H1 (cell line): ENCODE measurements at regions of chr4 and their contacts with region 1.

Region 1: DNA sequence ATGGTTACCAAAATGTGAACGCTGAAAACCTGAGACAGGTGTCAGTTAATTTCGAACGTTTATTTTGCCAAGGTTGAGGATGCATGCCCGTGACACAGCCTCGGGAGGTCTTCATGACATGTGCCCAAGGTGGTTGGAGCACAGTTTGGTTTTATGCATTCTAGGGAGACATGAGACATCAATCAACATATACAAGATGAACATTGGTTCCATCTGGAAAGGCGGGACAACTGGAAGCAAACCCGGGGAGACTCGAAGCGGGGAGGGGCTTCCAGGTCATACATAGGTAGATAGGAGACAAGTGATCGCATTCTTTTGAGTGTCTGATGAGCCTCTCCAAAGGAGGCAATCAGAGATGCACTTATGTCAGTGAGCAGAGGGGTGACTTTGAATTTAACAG is 11.0 kb upstream of the SH3BP2 start:
- DNase-seq: no peak
- H3K4me3 ChIP-seq: no peak overlapping the region
- H3K27ac ChIP-seq: no peak overlapping the region
- H3K4me1 ChIP-seq: peaks cover 1 to 9% (median 4%) of the 10 kb centered on the region in 4 experiments; a peak in 5 of 7 replicates
- H3K27me3 ChIP-seq: 0 out of 7 replicates have a peak, but pooled peaks cover 0 to 2% (median 0%) of the 10 kb centered on the region in 4 experiments
- CTCF ChIP-seq: no peak
- EP300 ChIP-seq: no peak
- POLR2A ChIP-seq: no peak
- RAD21 ChIP-seq: no peak

Region 2: DNA sequence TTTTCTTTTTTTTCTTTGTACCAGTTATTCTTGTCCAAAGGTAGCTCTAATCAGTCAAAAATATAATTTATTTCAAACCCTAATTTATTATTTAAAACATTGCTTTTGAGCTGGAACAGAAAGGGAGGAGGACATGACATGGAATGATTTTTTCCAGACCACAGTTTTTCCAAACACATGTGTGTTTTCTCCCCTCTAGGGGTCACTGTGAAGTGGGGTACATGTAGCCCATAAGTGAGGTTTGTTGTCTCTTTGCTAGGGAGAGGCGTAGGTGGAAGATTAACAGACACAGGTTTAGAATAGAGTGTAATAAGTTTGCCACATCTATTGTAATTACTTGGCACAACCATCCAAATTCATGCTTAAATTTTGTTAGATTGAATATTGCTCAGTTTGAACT is 108.8 kb before region 1 on chr4:
- CTCF ChIA-PET with region 1: no interaction called
- POLR2A ChIA-PET with region 1: no interaction called
- DNase-seq: no peak
- H3K4me3 ChIP-seq: no peak overlapping the region
- H3K27ac ChIP-seq: no peak overlapping the region
- H3K4me1 ChIP-seq: no peaks in the 10 kb centered on the region
- H3K27me3 ChIP-seq: no peaks in the 10 kb centered on the region
- CTCF ChIP-seq: peak in 2 of 3 experiments; percentile 19 to 45; a peak in 2 of 4 replicates
- EP300 ChIP-seq: no peak
- POLR2A ChIP-seq: no peak
- RAD21 ChIP-seq: peak; percentile 26 to 33; a peak in 3 of 4 replicates

Region 3: DNA sequence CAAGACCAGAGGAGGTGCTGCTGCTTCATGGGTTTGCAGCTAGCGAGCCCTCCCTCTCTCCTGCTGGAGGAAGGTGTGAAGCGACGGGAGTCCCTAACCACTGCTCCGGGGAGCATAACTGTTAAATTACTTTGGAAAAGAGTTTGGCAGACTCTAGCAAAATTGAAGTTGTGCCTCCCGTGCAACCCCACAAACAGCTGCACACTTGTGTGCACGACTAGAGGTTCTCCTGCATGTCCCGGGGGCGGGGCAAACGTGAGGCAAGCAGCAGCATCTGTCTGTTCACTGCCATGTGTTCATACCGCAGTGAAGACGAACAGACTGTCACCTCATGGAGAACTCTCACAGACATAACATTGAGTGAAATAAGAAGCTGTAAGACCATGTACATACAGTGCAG is 60.3 kb before region 1 on chr4:
- CTCF ChIA-PET with region 1: no interaction called
- POLR2A ChIA-PET with region 1: no interaction called
- DNase-seq: no peak
- H3K4me3 ChIP-seq: no peak overlapping the region
- H3K27ac ChIP-seq: no peak overlapping the region
- H3K4me1 ChIP-seq: no peaks in the 10 kb centered on the region
- H3K27me3 ChIP-seq: no peaks in the 10 kb centered on the region
- CTCF ChIP-seq: no peak
- EP300 ChIP-seq: no peak
- POLR2A ChIP-seq: no peak
- RAD21 ChIP-seq: no peak; a peak in 1 of 4 replicates

Region 4: DNA sequence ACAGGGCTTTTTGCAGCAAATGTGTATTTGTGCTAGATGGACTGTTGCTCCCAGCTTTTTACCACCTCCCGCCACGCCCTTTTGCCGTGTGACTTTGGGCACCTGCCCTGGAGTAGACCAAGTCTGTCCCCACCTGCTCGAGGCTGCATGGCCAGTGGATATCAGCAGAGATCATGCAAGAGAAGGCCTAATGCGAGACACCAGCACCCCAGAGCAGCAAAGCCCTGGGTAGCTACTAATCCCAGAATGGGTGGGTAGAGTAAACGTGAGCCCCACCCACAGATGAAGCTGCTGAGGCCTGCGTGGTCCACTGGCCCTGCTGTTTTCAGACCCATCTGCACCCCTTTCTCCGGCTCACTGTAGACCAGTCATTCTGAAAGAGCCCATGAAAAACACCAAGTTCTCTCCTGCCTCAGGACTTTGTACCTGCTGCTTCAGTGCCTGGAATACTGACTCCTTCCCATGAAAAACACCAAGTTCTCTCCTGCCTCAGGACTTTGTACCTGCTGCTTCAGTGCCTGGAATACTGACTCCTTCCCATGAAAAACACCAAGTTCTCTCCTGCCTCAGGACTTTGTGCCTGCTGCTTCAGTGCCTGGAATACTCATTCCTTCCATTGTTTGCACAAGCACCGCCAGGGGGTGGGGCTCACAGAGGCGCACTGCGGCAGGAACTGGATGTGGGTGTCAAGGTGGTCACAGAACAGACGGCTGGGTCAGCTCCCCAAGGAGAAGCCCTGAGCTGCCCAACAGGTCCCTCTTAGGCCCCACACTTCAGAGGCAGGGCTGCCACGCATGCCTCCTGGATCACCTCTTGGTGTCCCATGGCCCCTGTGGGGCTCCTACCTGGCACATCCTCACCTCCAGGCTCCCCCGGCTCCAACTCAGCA is 20.6 kb before region 1 on chr4:
- CTCF ChIA-PET with region 1: interaction called, 6 read pairs
- POLR2A ChIA-PET with region 1: interaction called, 13 read pairs
- DNase-seq: no peak
- H3K4me3 ChIP-seq: no peak overlapping the region
- H3K27ac ChIP-seq: no peak overlapping the region
- H3K4me1 ChIP-seq: peaks cover 0 to 4% (median 3%) of the 10 kb centered on the region in 4 experiments; a peak in 4 of 7 replicates
- H3K27me3 ChIP-seq: peaks cover 0 to 2% (median under 1%) of the 10 kb centered on the region in 4 experiments; a peak in 1 of 7 replicates
- CTCF ChIP-seq: no peak
- EP300 ChIP-seq: no peak
- POLR2A ChIP-seq: no peak
- RAD21 ChIP-seq: no peak

Region 5: GRCh38 chr4:2767705-2768074 is 14.2 kb before region 1 on chr4:
- CTCF ChIA-PET with region 1: interaction called, 6 read pairs
- POLR2A ChIA-PET with region 1: interaction called, 16 read pairs
- DNase-seq: no peak
- H3K4me3 ChIP-seq: no peak overlapping the region
- H3K27ac ChIP-seq: no peak overlapping the region
- H3K4me1 ChIP-seq: peaks cover 0 to 7% (median 6%) of the 10 kb centered on the region in 4 experiments; a peak in 6 of 7 replicates
- H3K27me3 ChIP-seq: 0 out of 7 replicates have a peak, but pooled peaks cover 0 to 2% (median under 1%) of the 10 kb centered on the region in 4 experiments
- CTCF ChIP-seq: no peak
- EP300 ChIP-seq: no peak
- POLR2A ChIP-seq: no peak
- RAD21 ChIP-seq: no peak

Region 6: DNA sequence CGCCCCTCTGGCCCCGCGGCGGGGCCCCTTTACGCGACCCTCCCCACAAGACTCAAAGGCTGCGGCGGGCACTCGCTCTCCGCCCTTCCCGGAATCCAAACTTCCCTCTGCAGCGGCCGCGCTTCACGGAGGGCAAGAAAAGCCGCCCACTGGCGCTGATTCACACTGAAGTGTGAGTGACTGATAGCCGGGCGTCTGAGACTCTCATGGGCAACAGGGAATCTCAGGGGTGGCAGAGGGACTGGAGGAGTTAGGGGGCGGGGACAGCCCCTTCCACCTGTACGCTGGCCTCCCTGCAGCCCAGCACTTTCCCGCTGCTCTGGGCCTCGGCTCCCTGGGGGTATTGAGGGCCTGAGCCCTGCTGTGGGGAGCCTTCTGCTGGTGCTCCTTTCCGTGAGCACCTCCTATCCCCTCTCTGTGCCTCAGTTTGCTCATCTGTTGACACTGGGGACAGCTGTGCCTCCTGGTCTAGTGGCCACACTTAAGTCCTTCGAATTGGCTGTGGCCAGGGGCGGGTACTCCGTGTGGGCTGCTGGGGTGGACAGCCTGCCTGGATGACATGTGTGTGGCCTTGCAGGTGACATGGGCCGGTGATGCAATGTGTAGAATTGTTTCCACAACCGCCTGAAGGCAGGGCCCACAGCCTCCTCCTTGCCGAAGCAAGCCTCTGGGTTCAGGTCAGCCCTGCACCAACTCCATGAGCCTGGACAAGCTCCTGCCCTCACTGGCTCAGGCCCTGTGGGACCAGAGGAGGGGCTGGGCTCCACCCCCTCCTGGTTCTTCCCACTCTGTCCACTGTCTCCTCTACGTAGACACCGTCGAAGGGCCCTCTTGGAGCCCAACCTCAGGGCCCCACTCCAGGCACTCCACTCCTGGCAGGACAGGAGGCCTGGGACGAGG is 11.9 kb after region 1 on chr4:
- CTCF ChIA-PET with region 1: no interaction called
- POLR2A ChIA-PET with region 1: interaction called, 10 read pairs
- DNase-seq: no peak
- H3K4me3 ChIP-seq: peak overlapping the region; percentile 38 to 65 (median 40)
- H3K27ac ChIP-seq: no peak overlapping the region
- H3K4me1 ChIP-seq: peaks cover 0 to 21% (median 10%) of the 10 kb centered on the region in 4 experiments; a peak in 6 of 7 replicates
- H3K27me3 ChIP-seq: peaks cover 0 to 19% (median 12%) of the 10 kb centered on the region in 4 experiments; a peak in 5 of 7 replicates
- CTCF ChIP-seq: no peak
- EP300 ChIP-seq: no peak
- POLR2A ChIP-seq: no peak
- RAD21 ChIP-seq: no peak